SK-N-SH (cell line): ENCODE measurements at regions of chr15 and their contacts with region 1.

Region 1: DNA sequence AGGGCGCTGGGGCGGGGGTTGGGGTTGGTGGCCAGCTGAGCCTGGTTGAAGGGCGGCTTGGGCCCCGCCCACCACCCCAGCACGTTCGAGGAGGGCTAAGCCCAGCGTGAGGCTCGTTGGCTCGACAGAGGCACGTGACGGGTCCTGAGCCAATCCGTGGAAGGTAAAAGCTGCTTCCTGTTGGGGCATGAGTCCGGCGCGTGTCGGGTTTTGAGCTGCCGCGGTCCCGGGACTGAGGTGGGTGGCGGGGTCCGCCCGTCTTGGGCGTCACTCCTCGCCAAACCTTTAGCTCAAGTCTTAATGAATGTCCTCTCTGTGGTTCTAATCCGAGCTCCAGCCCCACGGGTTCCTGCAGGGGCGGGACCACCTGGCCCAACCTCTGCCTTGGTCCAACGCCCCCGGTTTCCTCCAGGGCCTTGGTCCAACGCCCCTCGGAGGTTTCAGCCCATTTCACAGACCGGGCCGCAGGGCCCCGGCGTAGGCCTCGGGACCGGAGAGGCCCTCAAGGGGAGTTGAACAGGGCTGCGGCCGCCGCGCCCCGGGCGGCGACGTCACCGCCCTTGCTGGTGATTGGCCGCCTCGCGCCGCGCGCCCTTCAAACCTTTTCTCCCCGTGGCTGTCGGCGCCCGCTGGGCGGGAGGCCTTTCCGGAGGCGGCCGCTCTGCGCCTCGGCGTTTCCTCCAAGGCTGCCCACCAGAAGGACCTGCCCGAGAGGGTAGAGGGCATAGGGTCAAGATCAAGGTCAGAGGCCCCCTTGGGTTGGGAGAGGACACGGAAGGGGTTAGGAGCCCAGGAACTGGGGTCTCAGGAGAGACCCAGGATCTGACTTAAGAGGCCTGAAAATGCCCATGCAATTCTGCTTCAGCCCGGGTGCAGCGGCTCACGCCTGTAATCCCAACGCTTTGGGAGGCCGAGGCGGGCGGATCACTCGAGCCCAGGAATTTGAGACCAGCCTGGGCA is at the start of gene RCCD1:
- DNase-seq: peak; percentile 98
- H3K4me3 ChIP-seq: peak within 1 kb of the TSS; percentile 76 to 81
- H3K27ac ChIP-seq: peak within 1 kb of the TSS; percentile 85 to 88
- H3K4me1 ChIP-seq: peaks cover 0 to 23% of the 10 kb centered on the region in 2 experiments; a peak in 1 of 4 replicates
- H3K27me3 ChIP-seq: no peaks in the 10 kb centered on the region
- CTCF ChIP-seq: no peak
- EP300 ChIP-seq: no peak
- RAD21 ChIP-seq: no peak
- polyA plus RNA-seq, gene RCCD1: 19.5 and 21.2 TPM in 2 replicates

Region 2: DNA sequence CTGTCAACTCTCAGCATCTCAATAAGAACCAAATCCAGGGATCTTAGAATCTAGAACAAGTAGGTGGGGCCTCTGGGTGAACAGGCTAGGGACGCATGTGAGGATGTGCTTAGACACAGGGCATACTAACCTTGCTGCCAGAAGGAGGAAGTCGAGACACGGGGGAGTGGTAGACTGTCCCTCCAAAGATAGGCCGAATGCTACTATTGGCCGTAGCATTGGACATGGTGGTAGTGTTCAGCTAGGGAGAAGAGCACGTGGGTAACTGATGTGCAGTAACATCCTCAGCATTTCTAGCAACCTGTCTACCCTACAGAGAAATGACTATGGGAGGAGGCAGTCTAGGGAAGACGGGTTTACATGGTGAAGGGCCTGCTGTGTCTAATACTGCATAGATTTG is 15.3 kb after region 1 on chr15:
- CTCF ChIA-PET with region 1: interaction called, 74 read pairs
- POLR2A ChIA-PET with region 1: interaction called, 3 read pairs
- DNase-seq: no peak
- H3K4me3 ChIP-seq: no peak overlapping the region
- H3K27ac ChIP-seq: no peak overlapping the region
- H3K4me1 ChIP-seq: no peaks in the 10 kb centered on the region
- H3K27me3 ChIP-seq: no peaks in the 10 kb centered on the region
- CTCF ChIP-seq: no peak
- EP300 ChIP-seq: no peak
- RAD21 ChIP-seq: no peak

Region 3: GRCh38 chr15:91007266-91007665 is 52.3 kb after region 1 on chr15:
- CTCF ChIA-PET with region 1: interaction called, 17 read pairs
- POLR2A ChIA-PET with region 1: interaction called, 3 read pairs
- DNase-seq: no peak
- H3K4me3 ChIP-seq: no peak overlapping the region
- H3K27ac ChIP-seq: no peak overlapping the region
- H3K4me1 ChIP-seq: no peaks in the 10 kb centered on the region
- H3K27me3 ChIP-seq: no peaks in the 10 kb centered on the region
- CTCF ChIP-seq: no peak
- EP300 ChIP-seq: no peak
- RAD21 ChIP-seq: no peak

Region 4: DNA sequence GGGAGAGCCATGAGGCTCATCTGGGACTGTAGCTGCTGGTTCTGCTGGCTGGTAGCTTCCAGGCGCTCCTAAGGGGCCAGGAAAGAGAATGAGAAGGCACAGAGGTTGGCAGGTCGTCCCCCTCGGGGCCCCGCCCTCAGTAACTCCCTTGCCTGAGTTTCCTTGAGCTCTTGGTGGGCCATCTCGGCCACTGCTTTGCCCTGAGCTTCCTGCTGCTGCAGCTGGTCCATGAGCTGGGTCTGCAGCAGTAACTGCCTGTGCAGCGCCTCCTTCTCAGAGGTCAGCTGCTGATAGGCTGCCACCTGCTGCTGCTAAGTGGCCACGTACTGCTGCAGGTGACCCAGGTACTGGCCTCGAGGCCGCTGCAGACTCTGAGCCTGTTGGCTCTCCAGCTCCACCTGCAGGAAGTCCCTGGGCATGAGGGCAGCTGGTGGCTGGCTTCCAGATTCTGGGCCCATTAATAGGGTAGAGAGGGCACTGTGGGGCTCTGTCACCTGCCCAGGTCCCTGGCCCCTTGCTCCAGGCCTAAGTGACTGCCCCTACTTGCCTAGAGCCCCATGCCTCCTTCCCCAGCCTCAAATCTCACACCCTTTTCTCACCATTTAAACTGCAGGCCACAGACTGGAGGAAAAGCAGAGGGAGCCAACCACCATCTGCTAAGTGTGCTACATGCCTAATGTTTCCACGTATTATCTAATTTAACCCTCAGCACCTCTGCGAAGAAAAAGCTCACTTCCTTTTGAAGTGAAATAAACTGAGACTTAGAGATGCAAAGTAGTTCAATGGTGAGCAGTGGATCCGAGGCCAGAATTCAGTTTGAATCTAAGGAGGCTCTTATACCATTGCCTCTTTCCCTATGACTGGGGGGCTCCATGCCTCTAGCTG is 78.2 kb after region 1 on chr15:
- CTCF ChIA-PET with region 1: interaction called, 41 read pairs
- POLR2A ChIA-PET with region 1: interaction called, 3 read pairs
- DNase-seq: peak; percentile 40
- H3K4me3 ChIP-seq: no peak overlapping the region
- H3K27ac ChIP-seq: no peak overlapping the region
- H3K4me1 ChIP-seq: no peaks in the 10 kb centered on the region; a peak in 1 of 4 replicates
- H3K27me3 ChIP-seq: 0 out of 2 replicates have a peak, but pooled peaks cover 7% of the 10 kb centered on the region
- CTCF ChIP-seq: peak; percentile 51
- EP300 ChIP-seq: no peak
- RAD21 ChIP-seq: peak; percentile 37

Region 5: DNA sequence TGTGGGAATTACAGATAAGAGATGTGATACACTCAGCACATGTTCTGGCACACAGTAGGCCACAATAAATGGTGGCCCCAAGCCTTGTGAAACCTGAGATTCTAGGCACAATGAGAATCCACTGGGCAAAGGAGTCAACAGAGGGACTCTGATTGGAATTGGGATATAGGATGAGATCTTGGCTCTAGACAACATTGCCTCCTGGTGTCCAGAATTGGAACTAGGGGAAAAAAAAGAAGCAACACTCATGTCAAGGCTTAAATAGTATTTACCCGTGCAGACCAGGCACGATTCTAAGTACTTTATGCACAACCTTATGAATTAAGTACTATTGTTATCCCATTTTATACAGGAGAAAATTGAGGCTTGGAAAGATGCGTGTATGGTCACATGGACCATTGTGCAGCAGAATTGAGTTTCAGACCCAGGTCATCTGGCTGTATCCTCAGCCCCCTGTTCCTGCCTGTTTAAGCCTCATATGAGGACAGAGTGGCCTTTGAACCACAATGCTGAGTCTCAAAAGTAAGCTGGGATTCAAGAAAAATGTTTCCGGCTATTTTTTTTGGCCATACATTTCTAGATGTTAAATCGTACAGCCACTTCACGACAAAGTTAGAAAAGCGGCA is 269.9 kb after region 1 on chr15:
- CTCF ChIA-PET with region 1: interaction called, 12 read pairs
- POLR2A ChIA-PET with region 1: no interaction called
- DNase-seq: peak; percentile 68
- H3K4me3 ChIP-seq: no peak overlapping the region; a peak in 1 of 4 replicates
- H3K27ac ChIP-seq: no peak overlapping the region
- H3K4me1 ChIP-seq: no peaks in the 10 kb centered on the region; a peak in 1 of 4 replicates
- H3K27me3 ChIP-seq: no peaks in the 10 kb centered on the region
- CTCF ChIP-seq: peak; percentile 69
- EP300 ChIP-seq: no peak
- RAD21 ChIP-seq: peak; percentile 84